Activated T-helper 1 cell treated with anti-CD3 and anti-CD28 coated beads, Interleukin-12 subunit alpha, Interleukin-12 subunit beta, Interleukin-2, Interleukin-4 antibody, amounts not matched to agents 30 ng/mL and 10 ng/mL and 1 ng/mL, durations not matched to agents 14 hours and 24 hours and 36 hours (primary cell): ENCODE measurements at regions of chr13 and their contacts with region 1.

Region 1: GRCh38 chr13:51070005-51070649 is 40.9 kb downstream of the C13orf42 start:
- DNase-seq: peak; percentile 70
- H3K4me3 Mint-ChIP-seq: no peak overlapping the region
- H3K27ac Mint-ChIP-seq: no peak overlapping the region
- H3K4me1 Mint-ChIP-seq: peaks cover 14% of the 10 kb centered on the region
- H3K27me3 Mint-ChIP-seq: peaks cover 11% of the 10 kb centered on the region

Region 2: GRCh38 chr13:49652355-49653305 is 1417.5 kb before region 1 on chr13:
- intact Hi-C with region 1: loop called (anchors 10 kb)
- DNase-seq: no peak
- H3K4me3 Mint-ChIP-seq: no peak overlapping the region
- H3K27ac Mint-ChIP-seq: no peak overlapping the region
- H3K4me1 Mint-ChIP-seq: no peaks in the 10 kb centered on the region
- H3K27me3 Mint-ChIP-seq: no peaks in the 10 kb centered on the region

Region 3: DNA sequence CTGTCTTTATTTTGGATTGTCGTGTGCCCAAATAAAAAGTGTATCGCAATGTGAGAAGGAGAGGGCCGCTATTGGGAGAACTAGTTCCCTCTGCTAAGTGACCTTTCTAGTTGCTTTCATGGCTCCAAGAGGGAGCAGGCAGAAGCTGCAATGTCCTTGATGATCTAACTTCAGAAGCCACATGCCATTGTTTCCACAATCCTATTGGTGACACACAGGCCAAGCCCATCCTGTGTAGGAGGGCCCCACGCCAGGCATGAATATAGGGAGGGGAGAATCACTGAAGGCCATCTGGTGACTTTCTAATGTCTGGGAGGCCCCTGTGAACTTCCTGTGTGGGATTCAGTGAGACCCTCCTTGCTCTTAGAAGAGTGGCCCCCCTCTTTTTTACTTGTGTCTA is 1229.9 kb before region 1 on chr13:
- intact Hi-C with region 1: loop called (anchors 5 kb)
- DNase-seq: no peak
- H3K4me3 Mint-ChIP-seq: no peak overlapping the region
- H3K27ac Mint-ChIP-seq: no peak overlapping the region
- H3K4me1 Mint-ChIP-seq: no peaks in the 10 kb centered on the region
- H3K27me3 Mint-ChIP-seq: no peaks in the 10 kb centered on the region

Region 4: GRCh38 chr13:49976314-49977258 is 1093.5 kb before region 1 on chr13:
- intact Hi-C with region 1: loop called (anchors 1 kb)
- DNase-seq: peak; percentile 56
- H3K4me3 Mint-ChIP-seq: no peak overlapping the region
- H3K27ac Mint-ChIP-seq: no peak overlapping the region
- H3K4me1 Mint-ChIP-seq: peaks cover 5% of the 10 kb centered on the region
- H3K27me3 Mint-ChIP-seq: no peaks in the 10 kb centered on the region

Region 5: GRCh38 chr13:50529154-50529882 is 540.8 kb before region 1 on chr13:
- intact Hi-C with region 1: loop called (anchors 5 kb)
- DNase-seq: no peak
- H3K4me3 Mint-ChIP-seq: no peak overlapping the region
- H3K27ac Mint-ChIP-seq: peak overlapping the region; percentile 59
- H3K4me1 Mint-ChIP-seq: peaks cover 45% of the 10 kb centered on the region
- H3K27me3 Mint-ChIP-seq: peaks cover 19% of the 10 kb centered on the region

Region 6: GRCh38 chr13:51047434-51048165 is 22.5 kb before region 1 on chr13:
- intact Hi-C with region 1: no loop called
- DNase-seq: no peak
- H3K4me3 Mint-ChIP-seq: no peak overlapping the region
- H3K27ac Mint-ChIP-seq: no peak overlapping the region
- H3K4me1 Mint-ChIP-seq: no peaks in the 10 kb centered on the region
- H3K27me3 Mint-ChIP-seq: peaks cover 12% of the 10 kb centered on the region

Region 7: GRCh38 chr13:51330791-51331190 is 260.7 kb after region 1 on chr13:
- intact Hi-C with region 1: no loop called
- DNase-seq: no peak
- H3K4me3 Mint-ChIP-seq: no peak overlapping the region
- H3K27ac Mint-ChIP-seq: peak overlapping the region; percentile 69
- H3K4me1 Mint-ChIP-seq: peaks cover 22% of the 10 kb centered on the region
- H3K27me3 Mint-ChIP-seq: no peaks in the 10 kb centered on the region